Vagina (tissue), 2 donors: ENCODE measurements at regions of chr4 and their contacts with region 1.

Region 1: GRCh38 chr4:121122661-121123060 is 41.5 kb downstream of the TNIP3 start:
- DNase-seq: no peak
- H3K4me3 ChIP-seq: no peak overlapping the region
- H3K27ac ChIP-seq: no peak overlapping the region
- H3K4me1 ChIP-seq: no peaks in the 10 kb centered on the region
- H3K27me3 ChIP-seq: no peaks in the 10 kb centered on the region
- CTCF ChIP-seq: no peak
- POLR2A ChIP-seq: no peak

Region 2: DNA sequence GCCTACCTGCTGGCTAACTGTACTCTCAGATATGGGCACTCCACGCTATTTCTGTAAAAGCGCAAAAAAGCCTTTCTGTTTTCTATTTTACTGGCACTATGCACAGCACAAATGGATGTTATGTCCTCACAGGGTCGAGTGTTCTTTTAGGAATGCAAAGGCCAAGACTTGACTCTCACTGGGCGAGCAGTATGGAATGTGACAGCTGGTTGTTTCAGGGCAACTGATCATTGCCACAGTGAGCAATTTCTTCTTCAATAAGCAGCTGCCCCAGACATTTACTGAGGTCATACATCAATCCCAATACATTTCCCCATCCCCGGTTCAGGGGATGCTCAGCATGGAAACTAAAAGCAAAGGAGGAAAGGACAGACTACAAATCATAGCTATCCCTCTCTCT is 1552.3 kb before region 1 on chr4:
- intact Hi-C with region 1: loop called (anchors 5 kb)
- DNase-seq: no peak
- H3K4me3 ChIP-seq: no peak overlapping the region
- H3K27ac ChIP-seq: peak overlapping the region; percentile 9
- H3K4me1 ChIP-seq: peaks cover 17% of the 10 kb centered on the region
- H3K27me3 ChIP-seq: no peaks in the 10 kb centered on the region
- CTCF ChIP-seq: no peak
- POLR2A ChIP-seq: no peak

Region 3: GRCh38 chr4:120843849-120844527 is 278.7 kb before region 1 on chr4:
- intact Hi-C with region 1: no loop called
- DNase-seq: no peak
- H3K4me3 ChIP-seq: no peak overlapping the region
- H3K27ac ChIP-seq: no peak overlapping the region
- H3K4me1 ChIP-seq: no peaks in the 10 kb centered on the region
- H3K27me3 ChIP-seq: no peaks in the 10 kb centered on the region
- CTCF ChIP-seq: no peak
- POLR2A ChIP-seq: no peak

Region 4: DNA sequence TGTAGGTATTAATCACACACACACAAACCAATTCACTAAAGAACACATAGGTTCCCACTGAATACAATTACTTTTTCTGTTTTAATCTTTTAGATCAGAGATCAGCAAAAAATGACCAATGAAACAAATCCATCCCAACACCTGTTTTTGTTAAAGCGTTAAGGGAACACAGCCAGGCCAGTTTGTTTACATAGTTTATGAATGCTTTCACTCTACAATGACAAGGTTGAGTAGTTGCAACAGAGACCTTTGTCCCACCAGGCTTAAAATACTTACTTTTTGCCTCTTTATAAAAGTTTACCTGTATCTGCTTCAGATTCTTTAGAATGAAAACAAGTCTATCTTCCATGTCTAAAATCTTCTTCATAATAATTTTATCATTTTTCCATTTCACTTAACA is 378.2 kb after region 1 on chr4:
- intact Hi-C with region 1: no loop called
- DNase-seq: no peak
- H3K4me3 ChIP-seq: no peak overlapping the region
- H3K27ac ChIP-seq: no peak overlapping the region
- H3K4me1 ChIP-seq: no peaks in the 10 kb centered on the region
- H3K27me3 ChIP-seq: no peaks in the 10 kb centered on the region
- CTCF ChIP-seq: no peak
- POLR2A ChIP-seq: no peak